GM10248 (cell line): ENCODE measurements at regions of chr16 and their contacts with region 1.

Region 1: DNA sequence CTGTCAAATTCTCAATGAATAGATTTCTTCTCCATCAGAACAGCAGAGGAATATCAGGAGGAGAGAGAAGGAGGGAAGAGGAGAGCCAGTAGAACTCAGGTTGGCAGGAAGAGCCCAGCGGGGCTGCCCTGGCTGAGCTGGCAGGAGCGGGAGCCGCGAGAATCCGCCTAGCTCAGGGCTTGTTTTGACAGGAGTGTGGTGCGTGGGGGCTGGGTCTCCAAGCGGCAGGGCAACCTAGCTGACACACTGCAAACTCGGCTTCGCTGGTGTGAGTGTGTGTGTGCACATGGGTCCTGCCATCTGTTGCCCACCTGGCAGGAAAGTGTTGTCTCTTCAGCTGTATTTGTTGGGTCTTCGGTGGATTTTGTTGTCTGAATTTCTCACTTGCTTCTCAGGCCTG is 27.9 kb upstream of the BCAR1 start:
- DNase-seq: no peak
- CTCF ChIP-seq: no peak

Region 2: GRCh38 chr16:75265845-75266701 is 13.2 kb before region 1 on chr16:
- CTCF ChIA-PET with region 1: interaction called, 12 read pairs
- POLR2A ChIA-PET with region 1: no interaction called
- DNase-seq: peak; percentile 94
- CTCF ChIP-seq: no peak

Region 3: GRCh38 chr16:75293772-75294171 is 14.5 kb after region 1 on chr16:
- CTCF ChIA-PET with region 1: interaction called, 12 read pairs
- POLR2A ChIA-PET with region 1: no interaction called
- DNase-seq: no peak
- CTCF ChIP-seq: no peak